Ovary (tissue), 10 donors: ENCODE measurements at regions of chr1 and their contacts with region 1.

Region 1: DNA sequence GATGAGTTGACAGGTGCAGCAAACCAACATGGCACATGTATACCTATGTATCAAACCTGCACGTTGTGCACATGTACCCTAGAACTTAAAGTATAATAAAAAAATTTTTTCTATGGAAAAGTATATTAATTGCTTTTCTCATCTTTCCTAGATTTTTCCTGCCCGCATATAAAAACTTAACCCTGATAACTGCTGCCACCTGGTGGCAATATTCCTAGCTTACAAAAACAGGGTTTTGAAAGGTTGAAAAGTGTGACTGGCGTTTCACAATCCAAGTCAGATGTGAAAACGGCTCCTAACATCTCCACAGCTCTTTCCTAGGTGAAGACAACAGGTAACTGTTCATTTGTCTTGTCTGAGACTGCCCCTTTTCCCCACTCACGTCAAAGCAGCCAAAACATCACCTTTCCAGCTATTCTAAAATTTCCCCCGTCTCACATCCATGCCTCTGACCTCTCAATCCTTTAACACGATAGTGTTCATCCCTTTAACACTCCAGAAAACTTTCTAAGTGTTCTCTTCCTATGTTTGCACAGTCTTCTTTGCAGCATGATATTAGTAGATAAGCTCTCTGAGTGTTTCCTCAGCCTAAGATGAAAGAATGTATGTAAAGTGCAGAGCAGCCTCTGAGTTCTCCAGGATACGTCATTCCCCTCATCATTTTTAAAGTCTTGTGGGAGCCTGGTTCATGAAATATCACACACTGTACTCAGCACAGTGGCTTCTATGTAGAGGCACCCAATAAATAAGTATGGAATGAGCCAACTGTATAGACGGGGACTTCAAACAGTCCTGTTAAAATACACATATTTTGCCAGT is 27.5 kb downstream of the OVGP1 start:
- DNase-seq: peak in 3 of 5 donors; percentile 20 to 54 (median 37)
- H3K4me3 ChIP-seq: no peak overlapping the region
- H3K27ac ChIP-seq: no peak overlapping the region
- H3K4me1 ChIP-seq: no peaks in the 10 kb centered on the region
- H3K27me3 ChIP-seq: no peaks in the 10 kb centered on the region
- CTCF ChIP-seq: peak in 2 of 3 donors; percentile 36 to 49
- EP300 ChIP-seq: no peak
- POLR2A ChIP-seq: no peak

Region 2: DNA sequence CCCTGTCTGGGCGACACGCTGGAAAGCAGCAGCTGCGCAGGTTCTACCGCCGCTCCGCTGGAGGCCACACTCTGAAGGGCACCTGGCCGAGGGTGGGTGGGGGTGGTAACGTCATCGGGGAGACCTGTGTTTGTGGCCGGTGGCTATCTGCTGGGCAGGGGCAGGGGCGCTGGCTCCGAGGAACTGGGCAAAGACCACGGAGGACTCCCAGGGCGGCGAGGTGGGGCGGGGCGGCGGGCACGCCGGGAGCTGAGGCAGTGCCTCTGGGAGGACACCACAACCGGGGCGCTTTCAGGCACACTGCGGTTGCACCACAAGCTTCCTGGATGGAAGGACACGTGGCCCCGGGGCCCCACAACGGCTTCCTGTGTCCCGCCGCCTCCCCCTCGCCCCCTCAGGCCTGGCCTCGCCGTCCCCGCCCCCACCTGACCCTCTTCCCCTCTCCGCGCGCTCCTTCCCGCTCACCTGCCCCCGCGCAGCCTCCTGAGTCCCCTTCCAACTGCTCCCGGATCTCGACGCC is 196.3 kb before region 1 on chr1:
- intact Hi-C with region 1: no loop called
- DNase-seq: peak; percentile 33 to 70 (median 46)
- H3K4me3 ChIP-seq: peak overlapping the region; percentile 62
- H3K27ac ChIP-seq: no peak overlapping the region
- H3K4me1 ChIP-seq: no peaks in the 10 kb centered on the region
- H3K27me3 ChIP-seq: no peaks in the 10 kb centered on the region
- CTCF ChIP-seq: no peak
- EP300 ChIP-seq: no peak
- POLR2A ChIP-seq: no peak

Region 3: DNA sequence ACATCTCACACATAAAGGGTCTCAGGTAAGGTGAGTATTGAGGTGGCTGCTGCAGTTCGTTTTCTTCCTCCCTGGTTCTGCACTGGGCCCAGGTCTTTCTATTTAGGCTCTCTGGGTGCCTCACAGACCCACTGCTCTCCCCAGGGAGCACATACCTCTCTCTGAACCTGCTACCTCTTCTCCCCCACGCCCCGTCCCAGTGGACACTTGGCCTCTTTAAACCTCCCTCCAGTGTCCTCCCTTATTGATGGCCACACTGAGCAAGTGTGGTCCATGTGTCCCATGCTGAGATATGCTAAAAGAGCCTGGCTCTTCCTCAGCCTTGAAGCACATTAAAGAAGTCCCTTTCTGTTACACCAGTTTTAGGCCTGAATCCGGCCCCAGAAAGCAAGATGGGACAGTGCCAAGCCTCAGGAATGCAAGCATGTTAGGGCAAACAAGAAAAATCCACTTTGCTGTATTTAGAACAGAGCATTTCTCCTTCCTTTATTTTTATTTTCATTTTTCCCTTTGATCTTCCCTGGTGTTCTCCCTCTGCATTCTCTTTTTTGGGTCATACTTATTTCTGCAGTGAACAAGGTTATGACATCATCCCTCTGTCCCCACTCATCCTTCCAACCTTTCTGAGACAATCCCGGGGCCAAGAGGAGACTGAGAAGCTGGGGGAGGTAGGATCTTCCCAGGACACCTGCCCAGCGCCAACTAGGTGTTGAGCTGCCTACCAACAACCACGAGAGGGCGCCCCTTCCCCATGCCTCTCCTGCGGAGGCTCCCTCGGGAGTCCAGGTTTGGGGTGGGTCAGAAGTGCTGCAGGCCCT is 177.5 kb before region 1 on chr1:
- intact Hi-C with region 1: loop called (anchors 5 to 10 kb)
- DNase-seq: peak; percentile 59 to 77 (median 73)
- H3K4me3 ChIP-seq: no peak overlapping the region
- H3K27ac ChIP-seq: no peak overlapping the region
- H3K4me1 ChIP-seq: no peaks in the 10 kb centered on the region
- H3K27me3 ChIP-seq: no peaks in the 10 kb centered on the region
- CTCF ChIP-seq: peak; percentile 58 to 67 (median 63)
- EP300 ChIP-seq: no peak
- POLR2A ChIP-seq: no peak